ENCODE measurements at regions of chr11 and their contacts with region 1.

Region 1: DNA sequence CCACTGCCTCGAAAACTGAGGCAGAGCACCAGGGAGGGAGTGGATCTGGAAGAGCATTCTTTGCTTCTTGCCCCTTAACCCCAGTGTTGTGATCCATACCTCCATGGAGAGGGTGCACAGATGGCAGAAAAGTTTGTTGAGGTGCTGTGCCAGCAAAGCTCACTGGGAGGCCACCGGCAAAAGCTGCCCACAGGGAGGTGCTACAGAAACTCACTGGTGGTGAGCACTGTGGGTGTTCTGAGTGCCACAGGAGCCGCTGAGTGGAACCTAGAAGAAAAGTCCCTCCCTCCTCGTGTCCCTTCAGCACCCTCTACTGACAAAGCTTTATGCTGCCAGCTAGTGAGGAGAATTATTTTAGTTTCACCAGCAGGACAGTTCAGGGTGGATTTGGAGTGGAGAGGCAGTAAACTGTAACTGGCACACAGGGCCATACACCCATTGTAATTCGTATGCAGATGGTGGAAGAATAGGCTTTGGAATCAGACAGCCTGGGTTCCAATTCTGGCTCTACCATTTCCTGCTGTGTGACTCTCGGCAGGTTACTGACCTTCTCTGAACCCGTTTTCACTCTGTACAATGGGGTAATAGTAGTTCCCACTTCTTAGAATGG is 84.6 kb downstream of the SWAP70 start:
- DNase-seq: peak in 8 of 9 donors; percentile 41 to 68 (median 60)
- ATAC-seq: peak; percentile 98
- H3K4me3 ChIP-seq: no peak overlapping the region
- H3K4me3 Mint-ChIP-seq: no peak overlapping the region
- H3K27ac ChIP-seq: no peak overlapping the region
- H3K27ac Mint-ChIP-seq: peak overlapping the region in 2 of 9 donors; percentile 28 to 46
- H3K4me1 ChIP-seq: no peaks in the 10 kb centered on the region
- H3K4me1 Mint-ChIP-seq: peaks cover 0 to 18% (median 0%) of the 10 kb centered on the region in 7 donors
- H3K27me3 ChIP-seq: no peaks in the 10 kb centered on the region
- H3K27me3 Mint-ChIP-seq: peaks cover 0 to 4% (median 0%) of the 10 kb centered on the region in 5 donors

Region 2: GRCh38 chr11:9534791-9535781 is 213.4 kb before region 1 on chr11:
- CTCF ChIA-PET with region 1: interaction called, 40 read pairs
- POLR2A ChIA-PET with region 1: no interaction called
- intact Hi-C with region 1: loop called in 1 of 2 experiments (anchors 1 kb)
- DNase-seq: peak; percentile 34 to 83 (median 62)
- ATAC-seq: peak; percentile 84
- H3K4me3 ChIP-seq: no peak overlapping the region
- H3K4me3 Mint-ChIP-seq: no peak overlapping the region
- H3K27ac ChIP-seq: no peak overlapping the region
- H3K27ac Mint-ChIP-seq: no peak overlapping the region
- H3K4me1 ChIP-seq: no peaks in the 10 kb centered on the region
- H3K4me1 Mint-ChIP-seq: no peaks in the 10 kb centered on the region
- H3K27me3 ChIP-seq: no peaks in the 10 kb centered on the region
- H3K27me3 Mint-ChIP-seq: no peaks in the 10 kb centered on the region

Region 3: DNA sequence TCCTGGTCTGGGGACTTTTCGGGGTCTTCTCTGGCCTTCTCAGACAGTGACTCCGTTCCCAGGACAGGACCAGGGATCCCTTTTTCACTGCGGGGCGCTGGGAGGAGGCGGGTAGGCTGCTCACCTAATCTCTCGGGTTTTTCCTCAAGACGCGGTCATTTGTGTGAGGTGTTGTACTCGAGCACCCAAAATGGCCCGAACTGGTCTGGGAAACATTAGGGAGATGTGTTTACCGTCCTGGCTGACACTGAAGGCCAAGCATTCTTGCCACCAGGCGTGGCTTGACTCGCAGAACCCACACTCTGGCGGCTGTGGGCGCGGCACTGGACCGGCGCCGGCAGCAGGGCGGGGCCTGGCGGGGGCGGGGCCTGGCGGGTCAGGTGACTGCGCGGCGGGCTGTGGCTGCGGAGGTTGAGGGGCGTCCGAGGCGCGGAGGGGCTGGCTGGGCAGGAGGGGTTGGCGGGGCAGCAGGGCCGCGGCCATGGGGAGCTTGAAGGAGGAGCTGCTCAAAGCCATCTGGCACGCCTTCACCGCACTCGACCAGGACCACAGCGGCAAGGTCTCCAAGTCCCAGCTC is 84.7 kb before region 1 on chr11 and contains the start of gene SWAP70:
- CTCF ChIA-PET with region 1: no interaction called
- POLR2A ChIA-PET with region 1: no interaction called
- intact Hi-C with region 1: loop called in 1 of 2 experiments (anchors 5 kb)
- DNase-seq: peak; percentile 15 to 89 (median 48)
- ATAC-seq: peak; percentile 91
- H3K4me3 ChIP-seq: peak within 1 kb of the TSS; percentile 58
- H3K4me3 Mint-ChIP-seq: peak within 1 kb of the TSS; percentile 79 to 93 (median 87)
- H3K27ac ChIP-seq: peak within 1 kb of the TSS; percentile 9
- H3K27ac Mint-ChIP-seq: peak within 1 kb of the TSS in 8 of 9 donors; percentile 7 to 81 (median 38)
- H3K4me1 ChIP-seq: peaks cover 5 to 6% of the 10 kb centered on the region in 2 donors
- H3K4me1 Mint-ChIP-seq: peaks cover 7 to 25% (median 17%) of the 10 kb centered on the region in 7 donors
- H3K27me3 ChIP-seq: peaks cover 0 to 4% of the 10 kb centered on the region in 2 donors
- H3K27me3 Mint-ChIP-seq: peaks cover 18 to 51% (median 38%) of the 10 kb centered on the region in 5 donors
- total RNA-seq, gene SWAP70: 4.2 to 15.6 (median 7.0) TPM

Region 4: DNA sequence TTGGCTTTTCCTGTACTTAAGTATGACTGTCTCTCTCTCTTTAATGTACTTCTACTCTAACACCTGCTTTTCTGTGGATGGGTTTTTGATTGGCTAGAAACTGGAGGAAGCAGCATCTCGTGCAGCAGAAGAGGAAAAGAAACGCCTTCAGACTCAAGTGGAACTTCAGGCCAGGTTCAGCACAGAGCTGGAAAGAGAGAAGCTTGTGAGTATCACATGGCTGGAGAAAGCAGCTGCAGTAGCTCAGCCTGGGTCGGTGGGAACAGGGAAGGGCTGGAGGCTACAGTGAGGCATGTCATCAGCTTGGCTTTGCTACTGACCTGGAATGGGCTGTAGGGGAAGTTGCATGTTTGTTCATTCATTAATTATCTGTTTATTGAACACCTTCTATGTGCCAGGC is 10.3 kb before region 1 on chr11:
- CTCF ChIA-PET with region 1: interaction called, 12 read pairs
- POLR2A ChIA-PET with region 1: no interaction called
- intact Hi-C with region 1: no loop called
- DNase-seq: no peak
- ATAC-seq: no peak
- H3K4me3 ChIP-seq: no peak overlapping the region
- H3K4me3 Mint-ChIP-seq: no peak overlapping the region
- H3K27ac ChIP-seq: no peak overlapping the region
- H3K27ac Mint-ChIP-seq: peak overlapping the region in 1 of 9 donors; percentile 29
- H3K4me1 ChIP-seq: no peaks in the 10 kb centered on the region
- H3K4me1 Mint-ChIP-seq: peaks cover 0 to 27% (median 0%) of the 10 kb centered on the region in 7 donors
- H3K27me3 ChIP-seq: no peaks in the 10 kb centered on the region
- H3K27me3 Mint-ChIP-seq: no peaks in the 10 kb centered on the region